Mucosa of descending colon (tissue), 3 donors: ENCODE measurements at regions of chr13 and their contacts with region 1.

Region 1: DNA sequence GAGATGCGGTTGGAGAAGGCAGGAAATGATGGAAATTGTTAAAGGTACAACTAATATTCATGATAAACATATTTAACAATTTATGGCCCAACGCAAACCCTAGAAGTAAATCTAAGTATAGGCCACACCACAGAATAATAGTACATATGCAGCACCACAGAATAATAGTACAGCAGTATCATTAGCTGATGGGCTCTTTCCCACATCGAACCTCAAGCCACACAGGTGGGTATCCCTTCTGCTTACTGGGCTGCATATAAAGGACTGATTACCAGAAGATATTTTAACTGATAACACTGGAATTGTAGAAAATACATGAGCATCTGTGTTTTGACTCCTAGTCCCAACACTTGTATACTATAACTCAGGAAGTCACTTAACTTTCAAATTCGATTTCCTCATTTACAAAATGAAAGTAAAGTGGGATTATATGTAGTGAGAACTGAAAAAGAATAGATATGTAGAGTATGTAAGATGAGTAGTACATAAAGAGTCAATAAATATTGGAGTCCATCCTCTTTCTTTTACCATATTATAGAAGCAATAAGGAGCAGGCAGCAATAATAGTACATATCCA is 91.5 kb downstream of the TSC22D1 start:
- DNase-seq: no peak
- ATAC-seq: no peak
- H3K4me3 ChIP-seq: no peak overlapping the region
- H3K4me1 ChIP-seq: no peaks in the 10 kb centered on the region
- CTCF ChIP-seq: no peak

Region 2: GRCh38 chr13:44969551-44970484 is 485.2 kb after region 1 on chr13:
- intact Hi-C with region 1: loop called (anchors 5 kb)
- DNase-seq: peak in 1 of 3 donors; percentile 43
- ATAC-seq: peak; percentile 80
- H3K4me3 ChIP-seq: no peak overlapping the region
- H3K4me1 ChIP-seq: peaks cover 7% of the 10 kb centered on the region
- CTCF ChIP-seq: peak; percentile 47